Activated naive CD4-positive, alpha-beta T cell treated with anti-CD3 and anti-CD28 coated beads for 36 hours (primary cell): ENCODE measurements at regions of chr1 and their contacts with region 1.

Region 1: DNA sequence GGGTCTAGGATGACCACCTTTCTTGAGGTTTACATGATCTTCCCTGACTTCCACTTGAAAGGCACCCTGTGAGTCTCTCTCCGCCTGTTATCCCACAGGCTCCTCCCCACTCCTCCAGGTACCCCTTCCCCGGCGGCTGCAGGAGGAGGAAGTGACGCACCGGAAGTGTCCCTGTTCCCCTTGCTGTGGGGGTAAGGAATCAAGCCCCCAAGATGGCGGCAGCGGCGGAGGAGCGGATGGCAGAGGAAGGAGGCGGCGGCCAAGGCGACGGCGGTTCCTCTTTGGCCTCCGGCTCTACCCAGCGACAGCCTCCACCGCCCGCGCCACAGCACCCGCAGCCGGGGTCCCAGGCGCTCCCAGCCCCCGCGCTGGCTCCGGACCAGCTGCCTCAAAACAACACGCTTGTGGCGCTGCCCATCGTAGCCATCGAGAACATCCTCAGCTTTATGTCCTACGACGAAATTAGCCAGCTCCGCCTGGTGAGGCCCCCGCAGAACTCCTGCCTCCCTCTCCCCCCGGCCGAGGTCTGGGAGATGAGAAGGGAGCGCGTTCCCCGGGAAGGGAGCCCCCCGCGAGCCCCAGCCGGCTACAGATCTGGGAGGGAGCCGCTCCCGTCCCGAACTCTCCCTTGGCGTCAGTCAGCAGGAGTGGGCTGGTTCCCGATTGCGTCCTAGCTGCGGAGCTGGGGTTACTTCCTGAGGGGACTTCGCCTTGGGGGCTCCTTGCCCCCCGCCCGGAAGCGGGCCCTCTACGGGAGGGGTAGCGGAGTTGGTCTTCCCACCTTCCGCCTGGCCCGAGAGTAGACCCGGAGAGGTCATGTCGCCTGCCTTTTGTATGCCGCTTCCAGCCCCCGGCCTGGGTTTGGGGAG is at the start of gene FBXO28:
- DNase-seq: peak; percentile 99
- H3K4me3 Mint-ChIP-seq: peak within 1 kb of the TSS; percentile 75
- H3K27ac Mint-ChIP-seq: peak within 1 kb of the TSS; percentile 83
- H3K4me1 Mint-ChIP-seq: peaks cover 26% of the 10 kb centered on the region
- H3K27me3 Mint-ChIP-seq: no peaks in the 10 kb centered on the region
- total RNA-seq, gene FBXO28: 9.6 to 9.7 TPM

Region 2: GRCh38 chr1:222713091-222713961 is 1400.8 kb before region 1 on chr1:
- CTCF ChIA-PET with region 1: no interaction called
- intact Hi-C with region 1: loop called (anchors 5 kb)
- DNase-seq: peak; percentile 91
- H3K4me3 Mint-ChIP-seq: peak overlapping the region; percentile 100
- H3K27ac Mint-ChIP-seq: peak overlapping the region; percentile 98
- H3K4me1 Mint-ChIP-seq: peaks cover 37% of the 10 kb centered on the region
- H3K27me3 Mint-ChIP-seq: no peaks in the 10 kb centered on the region

Region 3: DNA sequence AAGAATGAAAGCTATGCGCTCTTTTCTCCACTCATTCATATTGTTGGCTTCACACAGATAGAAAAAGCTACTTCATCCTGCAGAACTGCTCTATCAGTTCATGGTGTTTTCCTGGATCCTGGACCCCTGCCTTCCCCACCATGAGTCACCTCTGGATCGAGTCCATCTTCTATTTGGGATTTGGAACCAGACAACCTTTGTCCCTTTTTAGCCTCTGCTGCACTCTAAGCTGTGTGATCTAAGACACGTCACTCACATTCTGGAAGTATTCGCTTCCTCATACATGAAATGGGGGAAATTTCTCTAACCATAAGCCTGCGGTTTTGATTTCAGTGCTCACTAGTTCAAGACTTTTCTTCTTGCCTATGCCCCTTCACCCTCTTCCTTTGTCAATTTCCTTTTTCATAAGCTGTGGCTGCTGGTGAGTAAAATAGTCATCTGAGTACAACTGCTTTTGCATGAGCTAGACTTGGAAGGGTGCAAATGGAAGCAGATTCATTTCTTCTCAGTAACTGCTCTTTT is 54.8 kb after region 1 on chr1:
- CTCF ChIA-PET with region 1: interaction called, 4 read pairs
- intact Hi-C with region 1: loop called (anchors 1 kb)
- DNase-seq: peak; percentile 60
- H3K4me3 Mint-ChIP-seq: no peak overlapping the region
- H3K27ac Mint-ChIP-seq: peak overlapping the region; percentile 9
- H3K4me1 Mint-ChIP-seq: peaks cover 32% of the 10 kb centered on the region
- H3K27me3 Mint-ChIP-seq: no peaks in the 10 kb centered on the region

Region 4: DNA sequence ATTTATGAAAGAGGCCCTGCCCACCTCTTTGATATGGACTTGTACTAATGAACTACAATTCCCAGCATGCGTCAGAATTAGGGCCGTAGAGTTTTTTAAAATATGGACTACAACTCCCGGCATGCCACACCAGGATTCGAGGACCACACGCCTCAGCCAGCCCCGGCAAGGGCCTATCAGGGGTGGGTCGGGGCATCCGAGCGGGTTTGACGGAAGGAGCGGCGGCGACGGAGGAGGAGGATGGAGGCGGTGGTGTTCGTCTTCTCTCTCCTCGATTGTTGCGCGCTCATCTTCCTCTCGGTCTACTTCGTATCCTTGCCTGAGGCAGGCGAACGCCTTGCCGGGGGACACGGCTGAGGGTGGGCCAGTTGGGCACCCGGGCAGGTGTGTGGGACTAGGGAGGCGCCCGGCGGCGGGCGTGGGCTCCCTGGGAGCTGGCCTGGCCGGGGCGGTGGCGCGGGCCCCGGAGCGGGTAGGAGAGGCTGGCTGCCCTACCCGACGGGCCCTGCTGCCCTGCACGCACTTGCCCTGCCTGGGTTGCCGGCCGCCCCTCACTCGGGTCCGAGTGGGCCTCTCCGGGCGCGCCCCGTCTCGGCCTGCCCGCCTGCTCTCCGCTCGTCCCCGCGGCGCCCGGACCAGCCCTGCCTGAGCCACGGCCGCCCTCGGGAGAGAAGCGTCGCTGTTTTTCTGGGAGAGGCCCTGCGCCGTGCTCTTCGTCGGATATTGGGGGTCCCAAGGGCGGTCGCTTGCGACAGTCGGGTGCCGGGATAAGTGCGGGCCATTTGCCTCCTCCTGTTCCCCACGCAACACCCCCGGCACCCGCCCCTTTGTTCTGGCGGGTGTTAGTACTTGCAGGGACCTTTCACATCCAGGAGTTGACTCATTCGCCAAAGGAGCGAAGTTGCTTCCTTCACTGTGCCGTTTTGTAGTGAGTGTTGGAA is 242.8 kb after region 1 on chr1 and contains the start of gene CNIH4:
- CTCF ChIA-PET with region 1: interaction called, 3 read pairs
- intact Hi-C with region 1: loop called (anchors 1 kb)
- DNase-seq: peak; percentile 94
- H3K4me3 Mint-ChIP-seq: peak within 1 kb of the TSS; percentile 89
- H3K27ac Mint-ChIP-seq: peak within 1 kb of the TSS; percentile 86
- H3K4me1 Mint-ChIP-seq: peaks cover 31% of the 10 kb centered on the region
- H3K27me3 Mint-ChIP-seq: no peaks in the 10 kb centered on the region
- total RNA-seq, gene CNIH4: 34.7 to 35.1 TPM

Region 5: DNA sequence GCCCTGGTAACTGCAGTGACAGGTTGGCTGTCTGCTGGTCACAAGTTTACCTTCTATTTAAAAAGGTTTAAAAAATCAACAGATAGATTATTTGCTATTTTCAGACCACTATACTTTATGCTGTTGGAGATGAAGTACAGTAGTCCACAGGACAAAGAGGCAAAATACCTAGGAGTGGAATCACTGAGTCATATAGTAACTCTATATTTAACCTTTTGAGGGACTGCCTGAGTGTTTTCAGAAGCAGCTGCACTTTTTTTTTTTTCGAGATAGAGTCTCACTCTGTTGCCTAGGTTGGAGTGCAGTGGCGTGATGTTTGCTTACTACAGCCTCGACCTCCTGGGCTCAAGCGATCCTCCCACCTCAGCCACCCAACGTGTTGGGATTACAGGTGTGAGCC is 254.3 kb after region 1 on chr1:
- CTCF ChIA-PET with region 1: no interaction called
- intact Hi-C with region 1: no loop called
- DNase-seq: no peak
- H3K4me3 Mint-ChIP-seq: no peak overlapping the region
- H3K27ac Mint-ChIP-seq: peak overlapping the region; percentile 56
- H3K4me1 Mint-ChIP-seq: peaks cover 59% of the 10 kb centered on the region
- H3K27me3 Mint-ChIP-seq: no peaks in the 10 kb centered on the region

Region 6: GRCh38 chr1:224458996-224459395 is 344.8 kb after region 1 on chr1:
- CTCF ChIA-PET with region 1: interaction called, 14 read pairs
- intact Hi-C with region 1: loop called (anchors 1 kb)
- DNase-seq: no peak
- H3K4me3 Mint-ChIP-seq: no peak overlapping the region
- H3K27ac Mint-ChIP-seq: peak overlapping the region; percentile 41
- H3K4me1 Mint-ChIP-seq: peaks cover 13% of the 10 kb centered on the region
- H3K27me3 Mint-ChIP-seq: no peaks in the 10 kb centered on the region

Region 7: GRCh38 chr1:224623743-224624333 is 509.7 kb after region 1 on chr1:
- CTCF ChIA-PET with region 1: no interaction called
- intact Hi-C with region 1: loop called (anchors 5 kb)
- DNase-seq: peak; percentile 92
- H3K4me3 Mint-ChIP-seq: peak overlapping the region; percentile 46
- H3K27ac Mint-ChIP-seq: peak overlapping the region; percentile 82
- H3K4me1 Mint-ChIP-seq: peaks cover 23% of the 10 kb centered on the region
- H3K27me3 Mint-ChIP-seq: peaks cover 25% of the 10 kb centered on the region